ENCODE measurements at regions of chr5 and their contacts with region 1.

Region 1: DNA sequence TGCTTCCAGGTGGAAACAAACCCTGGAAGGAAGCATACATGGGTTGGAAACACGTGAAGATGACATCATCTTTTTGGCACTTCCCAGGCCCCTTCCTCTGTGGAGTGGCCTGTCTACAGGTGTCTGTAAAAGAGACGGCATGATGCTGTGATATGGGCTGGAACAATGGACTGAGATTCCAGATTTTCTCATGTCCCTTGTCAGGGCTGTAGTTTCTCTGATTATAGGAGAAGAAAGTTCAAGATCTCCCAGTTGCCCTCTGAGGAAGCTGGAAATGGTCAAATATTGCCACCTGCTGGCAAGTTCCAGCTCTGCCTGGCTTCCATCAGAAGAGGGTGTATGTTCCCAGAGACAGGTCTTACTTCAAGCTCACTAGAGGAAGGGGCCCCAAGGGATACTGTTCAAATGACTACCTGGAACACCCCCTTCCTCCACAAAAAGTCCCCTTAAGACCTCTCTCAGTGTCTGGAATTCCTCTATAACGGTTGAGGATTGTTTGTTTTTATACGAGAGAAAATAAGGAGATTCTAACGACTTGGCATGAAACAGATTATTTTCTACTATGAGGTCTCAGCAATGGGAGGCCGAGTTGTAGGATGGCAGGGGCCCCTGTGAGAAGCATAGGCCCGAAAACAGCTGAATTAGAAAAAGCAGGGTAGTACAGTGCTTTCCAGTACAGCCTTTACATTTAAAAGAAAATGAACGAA is 7.3 kb upstream of the ANXA6 start:
- DNase-seq: peak; percentile 92
- H3K4me3 Mint-ChIP-seq: no peak overlapping the region
- H3K27ac Mint-ChIP-seq: no peak overlapping the region
- H3K4me1 Mint-ChIP-seq: peaks cover 17% of the 10 kb centered on the region
- H3K27me3 Mint-ChIP-seq: no peaks in the 10 kb centered on the region

Region 2: DNA sequence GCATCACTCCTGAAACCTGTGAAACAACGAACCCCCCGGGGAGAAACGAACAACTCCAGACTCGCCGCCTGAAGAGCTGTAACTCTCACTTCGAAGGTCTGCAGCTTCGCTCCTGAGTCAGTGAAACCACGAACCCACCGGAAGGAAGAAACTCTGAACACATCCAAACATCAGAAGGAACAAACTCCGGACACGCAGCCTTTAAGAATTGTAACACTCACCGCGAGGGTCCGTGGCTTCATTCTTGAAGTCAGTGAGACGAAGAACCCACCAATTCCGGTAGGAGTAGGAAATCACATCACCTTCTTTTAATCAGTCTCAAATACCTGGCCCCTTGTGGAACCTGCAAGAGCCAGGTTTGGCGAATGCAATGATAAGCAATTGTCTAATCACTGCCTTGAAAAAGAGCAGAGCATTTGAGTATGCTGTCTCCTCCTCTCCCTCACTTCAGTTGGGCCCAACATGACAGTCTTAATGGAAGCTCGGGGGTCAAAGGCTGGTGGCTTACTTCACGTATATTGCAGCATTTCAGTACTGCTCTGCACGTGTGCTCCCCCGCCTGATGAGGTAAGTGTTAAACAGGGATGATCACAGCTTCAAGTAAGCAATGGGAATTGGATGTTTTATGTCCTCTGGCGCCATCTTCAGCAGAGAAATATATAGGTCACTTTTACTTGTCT is 318.0 kb before region 1 on chr5:
- CTCF ChIA-PET with region 1: no interaction called
- intact Hi-C with region 1: loop called (anchors 2 kb)
- DNase-seq: peak; percentile 83
- H3K4me3 Mint-ChIP-seq: peak overlapping the region; percentile 79
- H3K27ac Mint-ChIP-seq: peak overlapping the region; percentile 80
- H3K4me1 Mint-ChIP-seq: peaks cover 25% of the 10 kb centered on the region
- H3K27me3 Mint-ChIP-seq: no peaks in the 10 kb centered on the region

Region 3: DNA sequence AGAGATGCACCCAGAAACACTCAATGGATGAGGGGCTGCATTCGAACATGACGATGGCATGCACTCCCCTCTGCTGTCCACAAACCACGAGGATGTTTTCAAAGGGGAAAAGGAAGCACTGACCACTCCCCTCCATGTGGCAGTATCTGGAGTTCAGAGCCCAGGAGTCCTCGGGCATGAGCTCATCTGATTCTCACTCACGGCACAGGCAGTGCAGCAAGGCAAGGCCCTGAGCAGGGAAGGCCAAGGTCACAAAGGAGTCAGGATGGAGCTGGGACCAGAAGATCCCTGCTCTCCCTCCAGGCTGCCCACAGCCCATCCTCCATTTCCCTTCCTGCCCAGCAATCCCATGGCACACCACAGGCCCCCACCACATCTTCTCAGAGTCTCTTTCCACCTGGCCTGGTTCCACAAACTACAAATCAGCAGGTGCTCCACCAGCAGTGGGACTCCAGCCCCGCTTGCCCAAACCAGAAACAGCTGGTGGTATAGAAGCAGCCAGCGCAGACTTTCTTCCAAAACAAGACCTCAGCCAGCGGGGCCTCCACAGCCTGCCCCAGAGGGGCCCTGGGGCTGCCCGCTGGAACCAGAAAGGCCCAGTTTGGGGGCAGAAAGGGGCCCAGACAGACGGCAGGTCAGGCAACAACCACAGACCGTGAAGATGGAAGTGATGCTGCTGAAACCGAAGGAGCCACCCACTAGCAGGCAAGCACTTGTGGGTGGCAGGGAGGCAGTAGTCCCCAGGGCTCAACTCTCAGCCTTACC is 96.2 kb before region 1 on chr5:
- CTCF ChIA-PET with region 1: interaction called, 10 read pairs
- intact Hi-C with region 1: no loop called
- DNase-seq: peak; percentile 46
- H3K4me3 Mint-ChIP-seq: peak overlapping the region; percentile 12
- H3K27ac Mint-ChIP-seq: peak overlapping the region; percentile 77
- H3K4me1 Mint-ChIP-seq: peaks cover 93% of the 10 kb centered on the region
- H3K27me3 Mint-ChIP-seq: no peaks in the 10 kb centered on the region

Region 4: DNA sequence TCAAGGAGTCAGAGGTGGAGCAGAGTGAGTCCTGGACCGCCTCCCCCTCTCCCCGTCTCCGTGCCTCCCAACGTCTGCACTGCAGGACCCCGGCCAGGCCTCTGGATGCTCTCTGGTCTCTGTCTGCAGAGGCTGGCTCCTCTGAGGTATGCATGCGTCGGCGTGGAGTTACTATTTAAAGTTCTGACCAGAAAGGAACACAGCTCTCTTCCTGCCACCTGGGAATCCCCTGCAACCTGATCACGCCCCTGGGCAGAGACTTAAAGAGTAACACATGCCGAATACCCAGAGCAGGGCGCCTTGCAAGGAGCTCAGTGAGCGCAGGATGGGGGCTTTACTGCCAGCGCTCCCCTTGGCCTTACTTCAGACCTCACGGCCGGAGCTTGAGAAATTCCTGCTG is 23.3 kb before region 1 on chr5:
- CTCF ChIA-PET with region 1: interaction called, 38 read pairs
- intact Hi-C with region 1: no loop called
- DNase-seq: peak; percentile 88
- H3K4me3 Mint-ChIP-seq: peak overlapping the region; percentile 67
- H3K27ac Mint-ChIP-seq: peak overlapping the region; percentile 82
- H3K4me1 Mint-ChIP-seq: peaks cover 86% of the 10 kb centered on the region
- H3K27me3 Mint-ChIP-seq: no peaks in the 10 kb centered on the region

Region 5: DNA sequence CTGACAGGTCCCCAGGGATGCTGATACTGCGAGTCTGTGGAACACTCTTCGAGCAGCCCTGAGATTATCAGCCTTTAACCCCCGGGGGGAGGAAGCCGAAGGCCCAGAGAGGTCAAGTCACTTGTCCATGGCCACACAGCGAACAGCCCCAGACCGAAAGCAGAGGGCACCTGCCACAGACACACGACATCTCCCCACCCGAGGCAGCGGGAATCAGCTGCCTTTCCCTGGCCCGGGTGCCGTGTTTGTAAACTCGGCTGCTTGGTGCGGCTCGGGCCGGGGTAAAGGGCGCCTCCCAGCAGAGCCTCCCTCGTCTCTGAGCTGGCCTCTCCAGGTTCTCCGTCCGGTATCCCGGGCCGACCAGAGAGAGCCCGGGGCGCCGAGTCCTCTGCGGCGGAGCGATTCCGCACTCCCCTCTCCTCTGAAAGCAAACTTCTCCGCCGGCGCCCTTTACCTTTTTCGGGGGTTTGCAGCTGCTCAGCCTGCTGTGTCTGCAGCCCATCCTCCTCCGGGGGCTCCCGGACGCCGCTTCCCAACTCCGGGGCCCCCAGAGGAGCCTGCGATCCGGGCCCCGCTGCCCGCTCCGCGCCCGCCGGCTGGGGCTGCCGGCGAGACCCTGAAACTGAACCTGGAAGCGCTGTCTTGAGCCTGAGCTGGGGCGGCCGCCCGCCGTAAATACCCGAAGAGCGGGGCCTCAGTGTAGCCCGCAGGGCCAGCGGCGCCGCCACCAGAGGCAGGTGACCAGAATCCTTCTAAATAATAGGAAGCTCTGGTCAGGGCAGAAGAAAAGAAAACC is 58.8 kb after region 1 on chr5 and contains the start of gene CCDC69:
- CTCF ChIA-PET with region 1: interaction called, 13 read pairs
- intact Hi-C with region 1: no loop called
- DNase-seq: peak; percentile 59
- H3K4me3 Mint-ChIP-seq: peak within 1 kb of the TSS; percentile 85
- H3K27ac Mint-ChIP-seq: peak within 1 kb of the TSS; percentile 93
- H3K4me1 Mint-ChIP-seq: peaks cover 56% of the 10 kb centered on the region
- H3K27me3 Mint-ChIP-seq: no peaks in the 10 kb centered on the region
- total RNA-seq, gene CCDC69: 15.5 to 18.5 TPM

Region 6: DNA sequence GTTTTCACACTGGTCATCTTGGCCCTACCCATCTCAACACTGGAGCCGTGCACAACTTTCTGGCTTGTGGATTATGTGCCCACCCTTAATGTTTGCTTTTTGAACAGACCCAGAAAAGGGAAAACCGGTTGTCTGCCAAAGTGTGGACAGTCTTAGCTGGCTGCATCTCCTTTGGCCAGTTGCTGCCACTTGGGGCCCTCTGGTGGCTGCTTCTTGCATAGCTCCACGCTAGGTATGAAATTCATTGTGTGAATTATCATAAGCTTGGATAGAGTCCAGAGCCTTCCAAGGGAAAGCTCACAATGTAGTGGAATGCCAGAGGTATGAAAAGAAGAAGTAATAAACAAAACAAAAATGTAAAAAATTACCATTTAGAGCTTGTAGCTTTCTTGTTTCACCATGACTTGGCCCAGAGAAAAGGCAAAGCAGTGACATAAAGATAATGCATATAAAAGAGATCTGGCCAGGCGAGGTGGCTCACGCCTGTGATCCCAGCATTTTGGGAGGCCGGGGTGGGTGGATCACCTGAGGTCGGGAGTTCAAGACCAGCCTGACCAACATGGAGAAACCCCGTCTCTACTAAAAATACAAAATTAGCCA is 151.3 kb after region 1 on chr5:
- CTCF ChIA-PET with region 1: interaction called, 12 read pairs
- intact Hi-C with region 1: loop called (anchors 2 kb)
- DNase-seq: peak; percentile 81
- H3K4me3 Mint-ChIP-seq: no peak overlapping the region
- H3K27ac Mint-ChIP-seq: no peak overlapping the region
- H3K4me1 Mint-ChIP-seq: no peaks in the 10 kb centered on the region
- H3K27me3 Mint-ChIP-seq: no peaks in the 10 kb centered on the region

Measured in activated naive CD4-positive, alpha-beta T cell treated with anti-CD3 and anti-CD28 coated beads for 36 hours (primary cell).